ENCODE measurements at regions of chr6 and their contacts with region 1.

Region 1: DNA sequence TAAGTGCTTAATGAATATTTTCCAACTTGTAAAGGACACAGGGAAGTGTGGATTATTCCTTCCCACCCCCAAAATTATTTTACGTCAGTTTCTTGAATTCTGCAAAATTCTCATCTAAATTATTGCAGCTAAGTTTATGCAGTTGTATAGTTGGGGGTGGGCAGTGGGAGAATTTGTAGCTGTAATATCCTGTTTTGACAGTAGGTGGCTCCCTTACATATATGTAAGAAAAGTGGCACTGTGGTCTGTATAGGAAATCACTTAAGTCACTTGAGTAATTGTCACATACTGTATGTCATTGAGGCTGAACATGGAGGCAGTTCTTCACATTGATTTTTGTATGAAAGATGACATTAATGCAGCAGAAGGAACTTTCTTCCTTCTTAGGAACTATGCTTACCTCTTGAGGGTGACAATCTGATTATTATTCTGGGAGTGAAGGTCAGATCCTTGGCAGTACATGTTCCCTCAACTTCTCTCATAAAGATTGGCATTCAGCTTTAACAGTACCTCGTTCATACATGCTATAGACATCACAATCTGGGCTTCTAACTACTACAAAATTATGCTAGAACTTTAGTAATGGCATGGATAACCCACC is 14.7 kb upstream of the CFAP206 start:
- DNase-seq: peak; percentile 30
- ATAC-seq: peak; percentile 77
- H3K4me3 Mint-ChIP-seq: no peak overlapping the region
- H3K27ac Mint-ChIP-seq: no peak overlapping the region
- H3K4me1 Mint-ChIP-seq: no peaks in the 10 kb centered on the region
- H3K27me3 Mint-ChIP-seq: no peaks in the 10 kb centered on the region

Region 2: GRCh38 chr6:87066449-87067333 is 326.4 kb before region 1 on chr6:
- CTCF ChIA-PET with region 1: no interaction called
- POLR2A ChIA-PET with region 1: no interaction called
- intact Hi-C with region 1: loop called (anchors 1 to 10 kb)
- DNase-seq: peak; percentile 61
- ATAC-seq: no peak
- H3K4me3 Mint-ChIP-seq: no peak overlapping the region
- H3K27ac Mint-ChIP-seq: no peak overlapping the region
- H3K4me1 Mint-ChIP-seq: no peaks in the 10 kb centered on the region
- H3K27me3 Mint-ChIP-seq: peaks cover 19% of the 10 kb centered on the region

Region 3: GRCh38 chr6:87407901-87408720 is 15.0 kb after region 1 on chr6 and contains the start of gene CFAP206:
- CTCF ChIA-PET with region 1: interaction called, 13 read pairs
- POLR2A ChIA-PET with region 1: no interaction called
- intact Hi-C with region 1: no loop called
- DNase-seq: peak; percentile 89
- ATAC-seq: peak; percentile 85
- H3K4me3 Mint-ChIP-seq: peak within 1 kb of the TSS; percentile 70
- H3K27ac Mint-ChIP-seq: no peak within 1 kb of the TSS
- H3K4me1 Mint-ChIP-seq: peaks cover 4% of the 10 kb centered on the region
- H3K27me3 Mint-ChIP-seq: peaks cover 15% of the 10 kb centered on the region
- total RNA-seq, gene CFAP206: not detected

Region 4: GRCh38 chr6:87472525-87473418 is 79.7 kb after region 1 on chr6 and contains the start of gene SLC35A1:
- CTCF ChIA-PET with region 1: interaction called, 11 read pairs
- POLR2A ChIA-PET with region 1: no interaction called
- intact Hi-C with region 1: loop called (anchors 5 kb)
- DNase-seq: peak; percentile 92
- ATAC-seq: peak; percentile 90
- H3K4me3 Mint-ChIP-seq: peak within 1 kb of the TSS; percentile 88
- H3K27ac Mint-ChIP-seq: peak within 1 kb of the TSS; percentile 93
- H3K4me1 Mint-ChIP-seq: peaks cover 18% of the 10 kb centered on the region
- H3K27me3 Mint-ChIP-seq: peaks cover 3% of the 10 kb centered on the region
- total RNA-seq, gene SLC35A1: 6.5 to 9.9 TPM

Region 5: DNA sequence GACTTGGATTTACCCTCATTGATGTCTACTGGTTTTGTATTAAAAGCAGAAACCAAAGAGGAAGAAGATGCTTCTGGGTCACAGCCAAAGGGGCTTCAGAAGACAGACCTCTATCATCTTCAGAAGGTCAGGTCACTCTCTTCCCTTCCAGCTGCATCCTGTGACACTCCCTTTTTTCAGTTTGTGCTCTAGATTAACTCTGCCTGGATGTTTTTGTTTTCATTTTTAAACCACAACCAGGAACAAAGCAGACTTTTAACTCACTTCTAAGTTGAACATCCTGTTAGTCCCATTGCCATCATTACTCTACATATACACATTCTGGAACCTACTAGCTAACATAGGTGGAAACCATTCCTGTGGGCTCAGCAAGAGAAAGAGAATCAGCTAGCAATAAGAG is 263.7 kb after region 1 on chr6:
- CTCF ChIA-PET with region 1: no interaction called
- POLR2A ChIA-PET with region 1: no interaction called
- intact Hi-C with region 1: no loop called
- DNase-seq: no peak
- ATAC-seq: no peak
- H3K4me3 Mint-ChIP-seq: no peak overlapping the region
- H3K27ac Mint-ChIP-seq: no peak overlapping the region
- H3K4me1 Mint-ChIP-seq: peaks cover 23% of the 10 kb centered on the region
- H3K27me3 Mint-ChIP-seq: no peaks in the 10 kb centered on the region

Region 6: DNA sequence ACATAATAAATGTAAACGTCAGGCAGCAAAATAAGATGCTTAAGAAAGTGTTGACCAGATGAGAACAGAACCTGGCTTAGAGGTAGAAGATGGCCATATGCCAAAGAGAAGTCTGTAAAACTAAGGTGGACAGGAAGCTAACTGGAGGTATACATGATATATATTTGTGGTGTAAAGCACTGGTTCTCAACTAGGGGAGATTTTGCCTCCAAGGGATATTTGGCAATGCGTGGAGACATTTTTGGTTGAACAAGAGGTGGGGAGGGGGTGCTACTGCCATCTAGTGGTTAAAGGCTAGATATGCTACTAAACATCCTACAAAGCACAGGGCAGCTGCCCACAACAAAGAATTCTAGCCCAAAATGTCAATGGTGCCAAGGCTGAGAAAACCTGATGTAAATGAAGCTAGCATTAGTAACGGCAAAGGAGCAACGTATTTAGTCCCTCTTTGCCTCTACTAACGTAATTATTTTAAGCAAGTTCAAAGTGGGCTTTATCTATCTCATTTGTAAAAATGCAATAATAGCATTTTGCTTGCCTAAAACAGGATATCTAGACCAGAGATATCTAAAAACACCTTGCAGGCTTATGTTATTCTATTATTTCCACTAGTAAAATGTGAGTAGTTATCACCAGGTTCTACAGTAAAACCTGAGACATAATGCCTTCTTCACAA is 1387.7 kb after region 1 on chr6:
- CTCF ChIA-PET with region 1: no interaction called
- POLR2A ChIA-PET with region 1: no interaction called
- intact Hi-C with region 1: loop called in 1 of 2 experiments (anchors 2 kb)
- DNase-seq: peak; percentile 61
- ATAC-seq: peak; percentile 85
- H3K4me3 Mint-ChIP-seq: no peak overlapping the region
- H3K27ac Mint-ChIP-seq: no peak overlapping the region
- H3K4me1 Mint-ChIP-seq: peaks cover 11% of the 10 kb centered on the region
- H3K27me3 Mint-ChIP-seq: no peaks in the 10 kb centered on the region